ENCODE measurements at regions of chr6 and their contacts with region 1.

Region 1: DNA sequence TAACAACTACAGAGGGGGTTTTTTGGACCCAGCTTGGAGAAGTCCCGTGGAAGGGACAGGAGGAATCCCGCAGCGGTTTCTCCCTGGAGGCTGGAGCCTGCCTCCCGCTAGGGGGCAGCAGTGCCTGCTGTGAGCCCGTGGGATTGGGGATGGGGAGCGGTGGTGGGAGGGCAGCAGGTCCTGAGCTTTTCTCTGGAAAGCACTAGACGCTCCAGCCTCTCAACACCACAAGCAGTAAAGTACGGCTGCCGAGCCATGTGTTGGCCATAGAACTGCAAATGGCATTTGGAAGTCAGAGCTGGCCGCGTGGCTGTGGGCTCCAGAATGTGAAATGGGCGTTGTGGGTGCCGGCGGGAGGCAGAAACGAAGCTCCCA is 47.7 kb downstream of the GMPR start:
- DNase-seq: peak; percentile 83
- ATAC-seq: peak; percentile 88
- H3K4me3 Mint-ChIP-seq: peak overlapping the region; percentile 14; the same call in 1 of the 2 replicates
- H3K27ac Mint-ChIP-seq: no peak overlapping the region
- H3K4me1 Mint-ChIP-seq: peaks cover 10% of the 10 kb centered on the region
- H3K27me3 Mint-ChIP-seq: no peaks in the 10 kb centered on the region
- CTCF ChIP-seq: peak; percentile 78

Region 2: DNA sequence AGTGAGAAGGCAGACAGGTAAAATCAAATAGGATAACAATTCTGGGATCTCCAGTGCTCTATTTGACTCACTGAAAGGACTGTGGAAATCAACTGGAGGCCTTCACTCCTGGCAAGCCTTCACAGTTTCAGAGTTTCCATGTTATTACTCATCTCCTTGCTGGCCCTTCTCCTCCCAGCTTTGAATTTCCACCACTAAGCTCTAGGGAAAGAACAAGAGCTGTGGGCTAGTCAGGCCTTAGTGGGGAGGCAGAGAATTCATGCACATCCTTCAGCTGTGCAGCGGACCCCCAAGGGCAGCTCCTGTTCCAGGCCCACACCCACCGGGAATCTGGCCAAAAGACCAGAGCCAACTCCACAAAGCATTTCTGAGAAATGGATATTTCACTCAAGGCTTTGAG is 131.2 kb before region 1 on chr6:
- CTCF ChIA-PET with region 1: no interaction called
- POLR2A ChIA-PET with region 1: no interaction called
- DNase-seq: no peak
- ATAC-seq: no peak
- H3K4me3 Mint-ChIP-seq: no peak overlapping the region
- H3K27ac Mint-ChIP-seq: no peak overlapping the region
- H3K4me1 Mint-ChIP-seq: no peaks in the 10 kb centered on the region
- H3K27me3 Mint-ChIP-seq: no peaks in the 10 kb centered on the region
- CTCF ChIP-seq: no peak

Region 3: DNA sequence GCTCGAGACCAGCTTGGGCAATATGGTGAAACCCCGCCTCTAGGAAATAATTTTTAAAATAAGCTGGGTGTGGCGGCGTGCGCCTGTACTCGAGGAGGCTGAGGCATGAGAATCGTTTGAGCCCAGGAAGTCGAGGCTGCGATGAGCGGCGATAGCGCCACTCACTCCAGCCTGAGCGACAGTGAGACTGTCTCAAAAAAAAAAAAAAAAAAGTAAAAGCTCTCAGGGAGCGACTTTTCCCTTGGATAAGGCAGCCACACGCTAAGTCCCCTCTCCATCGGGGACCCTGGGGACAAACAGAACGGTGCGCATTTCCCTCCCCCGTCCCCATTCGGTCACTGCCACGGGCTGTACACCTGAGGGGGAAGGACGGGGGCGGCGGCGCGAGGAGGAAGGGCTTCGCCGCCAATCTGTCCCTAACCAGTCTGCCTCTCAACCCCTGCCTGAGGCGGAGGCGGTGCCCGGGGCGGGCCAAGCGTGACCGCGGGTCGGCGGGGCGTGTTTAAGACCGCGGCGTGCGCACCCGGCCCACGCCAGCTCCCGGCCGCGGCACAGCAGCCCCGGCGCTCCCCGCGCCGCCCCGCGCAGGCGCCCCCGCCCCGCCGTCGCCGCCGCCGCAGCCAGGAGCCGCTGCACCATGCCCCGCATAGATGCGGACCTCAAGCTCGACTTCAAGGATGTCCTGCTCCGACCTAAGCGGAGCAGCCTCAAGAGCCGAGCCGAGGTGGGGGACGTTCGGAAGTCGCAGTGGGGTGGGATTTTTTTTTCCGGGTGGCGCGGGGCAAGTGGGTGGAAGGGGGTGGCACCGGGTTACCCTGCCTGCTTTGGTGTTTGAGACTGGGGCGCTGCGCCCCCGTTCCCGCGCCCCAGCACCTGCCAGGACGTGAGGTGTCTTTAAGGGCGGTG is 47.8 kb before region 1 on chr6 and contains the start of gene GMPR:
- CTCF ChIA-PET with region 1: interaction called, 14 read pairs
- POLR2A ChIA-PET with region 1: interaction called, 4 read pairs
- DNase-seq: peak; percentile 50
- ATAC-seq: peak; percentile 62
- H3K4me3 Mint-ChIP-seq: peak within 1 kb of the TSS; percentile 69
- H3K27ac Mint-ChIP-seq: no peak within 1 kb of the TSS
- H3K4me1 Mint-ChIP-seq: peaks cover 9% of the 10 kb centered on the region; the same call in 1 of the 2 replicates
- H3K27me3 Mint-ChIP-seq: peaks cover 53% of the 10 kb centered on the region
- CTCF ChIP-seq: no peak
- total RNA-seq, gene GMPR: 2.2 to 2.8 TPM (median 2.4 TPM) in 3 replicates

Region 4: GRCh38 chr6:16301511-16301910 is 15.4 kb after region 1 on chr6:
- CTCF ChIA-PET with region 1: interaction called, 11 read pairs
- POLR2A ChIA-PET with region 1: no interaction called
- DNase-seq: no peak
- ATAC-seq: no peak
- H3K4me3 Mint-ChIP-seq: no peak overlapping the region
- H3K27ac Mint-ChIP-seq: no peak overlapping the region
- H3K4me1 Mint-ChIP-seq: peaks cover 50% of the 10 kb centered on the region
- H3K27me3 Mint-ChIP-seq: peaks cover 9% of the 10 kb centered on the region
- CTCF ChIP-seq: no peak

Region 5: GRCh38 chr6:16332175-16332542 is 46.0 kb after region 1 on chr6:
- CTCF ChIA-PET with region 1: interaction called, 61 read pairs
- POLR2A ChIA-PET with region 1: no interaction called
- DNase-seq: peak; percentile 88
- ATAC-seq: peak; percentile 98
- H3K4me3 Mint-ChIP-seq: no peak overlapping the region
- H3K27ac Mint-ChIP-seq: no peak overlapping the region
- H3K4me1 Mint-ChIP-seq: peaks cover 5% of the 10 kb centered on the region
- H3K27me3 Mint-ChIP-seq: no peaks in the 10 kb centered on the region
- CTCF ChIP-seq: peak; percentile 84

Region 6: GRCh38 chr6:16450285-16450684 is 164.2 kb after region 1 on chr6:
- CTCF ChIA-PET with region 1: no interaction called
- POLR2A ChIA-PET with region 1: no interaction called
- DNase-seq: no peak
- ATAC-seq: no peak
- H3K4me3 Mint-ChIP-seq: no peak overlapping the region
- H3K27ac Mint-ChIP-seq: no peak overlapping the region
- H3K4me1 Mint-ChIP-seq: no peaks in the 10 kb centered on the region
- H3K27me3 Mint-ChIP-seq: no peaks in the 10 kb centered on the region
- CTCF ChIP-seq: no peak

Region 7: DNA sequence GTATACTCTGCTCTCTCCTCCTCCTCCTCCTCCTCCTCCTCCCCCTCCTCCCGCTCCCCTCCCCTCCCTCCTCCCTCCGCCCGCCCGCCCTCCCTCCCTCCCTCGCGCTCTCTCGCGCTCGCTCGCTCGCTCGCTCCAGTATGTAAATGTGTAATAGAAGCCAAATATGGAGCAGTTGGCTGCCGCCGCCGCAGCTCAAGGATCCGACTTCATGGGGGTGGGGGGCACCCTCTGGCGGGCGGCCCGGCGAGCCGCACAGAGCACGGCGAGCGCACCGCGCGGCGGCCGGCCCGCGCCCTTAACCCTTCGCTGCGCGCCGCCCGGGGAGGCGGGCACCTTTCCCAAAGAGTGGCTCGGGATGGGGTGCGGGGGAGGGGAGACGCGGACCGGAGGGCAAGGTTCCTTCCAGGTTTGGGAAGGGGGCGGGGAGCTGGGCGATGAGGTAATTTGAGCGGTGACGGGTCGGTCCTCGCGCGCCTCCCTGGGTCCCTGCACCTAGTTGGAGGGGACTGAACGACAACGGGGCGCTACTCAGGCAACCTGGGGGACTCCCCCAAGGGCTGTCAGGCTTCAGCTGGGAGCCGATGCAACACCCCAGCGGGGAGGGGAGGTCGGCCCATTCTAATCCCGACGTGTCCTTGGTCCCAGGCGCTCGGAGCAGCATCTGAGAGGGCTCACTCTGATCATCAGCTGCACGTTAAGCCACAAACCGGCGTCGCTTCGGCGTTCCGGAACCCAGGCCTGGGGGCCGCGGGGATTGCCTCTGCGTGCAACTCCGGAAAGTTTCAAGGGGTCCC is 475.5 kb after region 1 on chr6:
- CTCF ChIA-PET with region 1: interaction called, 11 read pairs
- POLR2A ChIA-PET with region 1: no interaction called
- DNase-seq: peak; percentile 87
- ATAC-seq: peak; percentile 56
- H3K4me3 Mint-ChIP-seq: peak overlapping the region; percentile 96
- H3K27ac Mint-ChIP-seq: no peak overlapping the region
- H3K4me1 Mint-ChIP-seq: peaks cover 30% of the 10 kb centered on the region
- H3K27me3 Mint-ChIP-seq: peaks cover 26% of the 10 kb centered on the region
- CTCF ChIP-seq: no peak